ENCODE measurements at regions of chr15 and their contacts with region 1.

Region 1: DNA sequence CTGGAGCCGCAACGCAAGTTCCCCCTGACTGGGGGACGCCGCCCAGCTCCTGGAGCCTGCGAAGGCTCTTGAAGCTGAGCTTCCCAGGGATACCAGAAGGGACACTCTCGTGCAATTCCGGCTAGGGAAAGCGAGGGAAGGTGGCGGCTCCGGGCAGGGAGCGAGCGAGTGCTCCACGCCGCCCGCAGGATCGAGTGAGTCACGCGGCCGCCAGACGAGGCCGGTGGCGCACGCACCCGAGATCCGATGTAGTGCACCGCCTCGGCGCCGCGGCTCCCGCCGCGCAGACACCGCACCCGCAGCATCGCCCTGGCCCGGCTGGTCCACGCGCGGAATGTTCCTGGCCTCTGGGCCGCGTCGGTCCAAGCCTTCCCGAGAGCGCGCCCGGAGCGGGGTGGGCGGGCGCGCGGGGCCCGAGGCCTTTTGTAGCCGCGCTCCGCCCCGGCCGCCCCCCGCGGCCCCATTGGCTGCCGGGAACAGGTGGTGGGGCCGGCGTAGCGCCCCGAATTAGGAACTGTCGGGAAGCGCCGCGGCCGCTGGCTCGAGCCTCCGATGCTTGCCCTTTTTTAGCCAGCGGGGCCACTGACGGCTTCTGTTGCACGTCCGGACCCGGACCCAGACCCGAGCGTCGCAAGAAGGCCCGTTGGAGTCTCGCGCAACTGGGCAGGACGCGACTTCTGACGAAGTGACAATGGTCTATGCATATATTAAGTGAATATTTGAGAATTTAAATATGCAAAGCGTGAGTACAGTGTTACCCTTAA is at the start of gene GATM:
- ATAC-seq: peak; percentile 89 to 94 (median 92)
- H3K4me3 ChIP-seq: peak within 1 kb of the TSS; percentile 47 to 60 (median 53)
- H3K27ac ChIP-seq: peak within 1 kb of the TSS; percentile 68 to 71
- H3K4me1 ChIP-seq: no peaks in the 10 kb centered on the region
- total RNA-seq, gene GATM: 1.4 to 69.2 (median 16.3) TPM

Region 2: GRCh38 chr15:45166834-45167630 is 211.3 kb before region 1 on chr15:
- in situ Hi-C with region 1: loop called in 2 of 9 experiments (anchors 25 kb)
- ATAC-seq: peak; percentile 72 to 84 (median 76)
- H3K4me3 ChIP-seq: peak overlapping the region; percentile 30 to 51 (median 38)
- H3K27ac ChIP-seq: peak overlapping the region; percentile 95 to 97
- H3K4me1 ChIP-seq: peaks cover 25 to 51% of the 10 kb centered on the region in 2 donors

Region 3: DNA sequence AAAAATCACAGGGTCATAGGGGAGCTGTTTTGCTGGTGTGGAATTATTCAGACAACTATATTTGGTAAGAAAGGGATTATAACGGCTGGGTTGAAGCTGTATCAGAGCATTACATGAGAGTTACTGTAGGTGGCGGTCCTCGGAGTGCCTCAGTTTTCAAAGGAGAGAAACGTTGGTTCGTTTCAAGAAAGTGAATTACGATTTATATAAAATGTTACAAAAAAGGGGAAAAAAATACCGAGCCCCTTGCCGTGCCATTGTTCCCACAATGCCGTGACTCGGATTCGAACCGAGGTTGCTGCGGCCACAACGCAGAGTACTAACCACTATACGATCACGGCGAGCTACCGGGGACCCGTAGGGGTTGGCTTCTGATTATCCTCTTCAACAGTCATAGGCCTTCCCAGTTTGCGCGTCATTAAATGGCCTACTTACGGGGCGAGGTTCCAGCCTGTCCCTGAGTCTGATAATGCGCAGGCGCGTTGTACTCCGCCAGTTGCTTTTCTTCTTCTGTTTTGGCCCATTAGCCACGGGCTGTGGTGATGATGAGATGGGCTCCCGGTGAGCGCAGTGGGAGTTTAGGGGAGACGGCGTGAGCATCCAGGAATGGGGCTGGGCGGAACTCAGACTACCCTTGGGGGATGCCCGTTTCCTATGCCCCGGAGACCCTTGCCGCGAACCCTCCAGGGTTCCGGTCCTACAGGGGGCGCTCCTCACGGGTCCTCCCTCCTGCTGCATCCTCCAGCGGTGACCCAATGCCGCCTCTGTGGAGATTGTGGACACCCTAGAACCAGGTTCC is 179.8 kb before region 1 on chr15:
- in situ Hi-C with region 1: loop called in 3 of 9 experiments (anchors 25 kb)
- ATAC-seq: peak; percentile 56 to 81 (median 70)
- H3K4me3 ChIP-seq: peak overlapping the region; percentile 45 to 73 (median 52)
- H3K27ac ChIP-seq: peak overlapping the region; percentile 94
- H3K4me1 ChIP-seq: no peaks in the 10 kb centered on the region

Region 4: GRCh38 chr15:45486317-45486716 is 108.0 kb after region 1 on chr15:
- in situ Hi-C with region 1: no loop called
- ATAC-seq: no peak
- H3K4me3 ChIP-seq: no peak overlapping the region
- H3K27ac ChIP-seq: no peak overlapping the region
- H3K4me1 ChIP-seq: peaks cover 2 to 4% of the 10 kb centered on the region in 2 donors

Measured in motor neuron (in vitro differentiated cells).